Left colon (tissue), 2 donors: ENCODE measurements at regions of chr19 and their contacts with region 1.

Region 1: GRCh38 chr19:6056801-6057650 is 53.3 kb downstream of the RFX2 start:
- DNase-seq: peak; percentile 54 to 80
- ATAC-seq: peak; percentile 80

Region 2: DNA sequence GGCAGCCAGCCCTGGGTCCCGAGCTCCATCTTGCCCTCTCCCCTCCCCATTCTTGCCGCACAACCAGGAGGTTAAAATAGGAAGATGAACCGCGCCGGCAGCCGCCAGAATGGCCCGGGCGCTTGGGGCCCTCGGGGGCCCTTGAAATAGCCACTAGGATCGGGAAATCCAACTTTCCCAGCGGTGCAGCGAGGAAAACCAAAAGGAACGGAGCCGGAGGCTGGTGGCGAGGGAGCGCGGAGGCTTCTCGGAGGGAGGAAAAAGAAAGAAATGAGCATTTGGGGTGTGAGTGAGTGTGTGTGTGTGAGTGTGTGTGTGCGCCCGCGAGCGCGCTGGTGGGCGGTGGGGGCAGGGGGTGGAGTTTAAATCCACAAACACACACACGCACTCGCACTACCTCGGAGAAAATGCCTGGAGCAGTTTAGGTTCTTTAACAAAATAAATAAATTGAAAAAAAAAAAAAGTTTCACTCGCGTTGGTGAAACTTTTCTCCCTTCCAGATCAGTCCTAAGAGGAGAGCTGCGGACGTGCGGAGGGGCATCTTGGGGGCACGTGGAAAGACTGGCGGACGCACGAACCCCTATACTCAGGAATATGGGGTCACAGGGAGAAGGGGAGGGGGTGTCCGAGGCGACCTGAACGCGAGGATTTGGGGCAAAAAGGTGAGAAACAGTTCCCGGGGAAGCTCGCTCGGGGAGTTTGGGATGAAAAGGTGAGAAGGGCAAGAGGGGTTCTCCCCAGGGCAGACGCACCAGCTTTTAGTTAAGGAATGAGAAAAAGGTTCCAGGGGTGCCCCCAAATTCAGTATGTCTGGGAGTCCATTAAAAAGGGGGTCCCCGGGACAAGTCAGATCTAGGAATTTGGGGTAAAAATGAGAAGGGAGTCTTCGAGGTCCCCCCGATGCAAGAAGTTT is 52.0 kb after region 1 on chr19:
- intact Hi-C with region 1: loop called (anchors 5 to 10 kb)
- DNase-seq: peak; percentile 67 to 68
- ATAC-seq: no peak